Naive thymus-derived CD4-positive, alpha-beta T cell (primary cell): ENCODE measurements at regions of chr19 and their contacts with region 1.

Region 1: DNA sequence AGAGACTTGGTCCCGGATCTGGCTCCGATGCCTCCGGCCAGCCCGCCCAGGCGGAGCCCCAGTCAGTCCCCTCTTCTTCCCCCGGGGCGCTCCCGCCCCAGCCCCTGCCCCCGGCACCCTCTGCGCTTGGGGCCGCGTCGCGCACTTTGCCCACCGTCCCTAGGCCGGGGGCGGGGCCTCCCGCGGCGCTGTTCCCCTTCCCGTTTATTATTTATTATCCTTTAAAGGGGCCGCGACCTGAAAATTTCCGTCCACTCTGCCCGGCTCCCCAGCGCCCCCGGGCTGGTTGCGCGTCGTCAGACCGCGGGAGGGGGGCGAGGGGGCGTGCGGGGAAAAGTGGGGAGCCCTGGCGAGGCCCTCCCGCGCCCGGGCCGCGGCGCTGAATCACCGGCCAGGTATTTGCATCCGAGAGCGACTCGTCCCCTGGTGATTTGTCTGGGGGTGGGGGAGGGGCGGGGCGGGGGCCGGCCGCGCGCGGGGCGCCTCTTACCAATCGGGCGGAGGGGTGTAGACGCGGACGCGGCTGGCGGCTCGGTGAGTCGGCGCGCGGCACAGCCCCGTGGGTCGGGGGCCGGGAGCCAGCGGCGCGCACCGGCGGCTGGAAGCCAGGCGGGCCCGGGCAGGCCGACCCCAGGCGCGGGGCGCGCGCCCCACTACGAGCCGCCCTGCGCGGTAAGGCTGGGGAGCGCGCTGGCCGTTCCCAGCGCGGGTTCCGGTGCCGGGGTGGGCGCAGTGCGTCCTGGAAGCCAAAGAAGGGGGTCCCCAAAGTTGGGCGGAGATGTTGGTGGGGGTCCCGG is at the start of gene ARID3A:
- DNase-seq: peak; percentile 59 to 83 (median 76)
- ATAC-seq: peak; percentile 83
- H3K4me3 ChIP-seq: peak within 1 kb of the TSS; percentile 79
- H3K4me3 Mint-ChIP-seq: peak within 1 kb of the TSS; percentile 63 to 88 (median 82)
- H3K27ac ChIP-seq: peak within 1 kb of the TSS; percentile 68
- H3K27ac Mint-ChIP-seq: peak within 1 kb of the TSS in 6 of 9 donors; percentile 14 to 80 (median 67)
- H3K4me1 ChIP-seq: peaks cover 0 to 4% of the 10 kb centered on the region in 2 donors
- H3K4me1 Mint-ChIP-seq: peaks cover 5 to 20% (median 13%) of the 10 kb centered on the region in 7 donors
- H3K27me3 ChIP-seq: no peaks in the 10 kb centered on the region
- H3K27me3 Mint-ChIP-seq: no peaks in the 10 kb centered on the region
- total RNA-seq, gene ARID3A: 7.1 to 33.1 (median 10.2) TPM

Region 2: DNA sequence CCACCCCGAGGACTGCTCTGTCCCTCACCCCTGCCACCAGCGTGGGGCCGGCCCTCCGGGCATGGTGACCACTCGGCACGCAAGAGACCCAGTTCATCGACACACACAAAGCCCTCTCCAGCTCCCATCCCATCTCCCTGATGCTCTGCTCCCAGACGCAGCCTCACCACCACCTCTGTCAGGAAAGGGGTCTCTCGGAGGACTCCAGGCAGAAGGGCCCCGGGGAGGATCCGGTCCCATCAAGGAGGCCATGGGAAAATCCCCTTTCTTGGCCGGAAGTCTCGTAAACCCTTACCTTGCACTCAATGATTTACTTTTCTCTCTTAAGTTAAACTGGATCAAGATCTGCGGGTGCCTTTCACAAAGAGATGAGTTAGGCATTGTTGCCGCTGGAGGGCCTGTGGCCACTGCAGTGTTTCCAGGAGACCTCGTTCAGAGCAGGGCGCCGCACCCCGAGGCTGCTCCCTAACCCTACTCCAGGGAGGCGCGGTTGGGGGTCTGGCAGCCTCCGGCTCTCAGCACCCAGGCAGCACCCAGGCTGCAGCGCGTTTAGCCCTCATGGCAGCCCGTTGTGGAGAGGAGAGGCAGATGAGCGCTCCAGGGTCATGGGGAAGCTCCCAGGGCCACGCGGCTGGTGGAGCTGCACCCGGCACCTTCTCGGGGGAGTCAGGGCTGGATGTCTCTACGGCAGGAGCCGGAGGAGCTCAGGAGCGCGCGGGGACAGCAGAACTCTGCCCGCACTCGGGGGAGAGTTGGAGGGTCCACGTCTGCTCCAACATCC is 547.7 kb before region 1 on chr19:
- CTCF ChIA-PET with region 1: no interaction called
- POLR2A ChIA-PET with region 1: no interaction called
- intact Hi-C with region 1: no loop called
- DNase-seq: no peak
- ATAC-seq: no peak
- H3K4me3 ChIP-seq: no peak overlapping the region
- H3K4me3 Mint-ChIP-seq: no peak overlapping the region
- H3K27ac ChIP-seq: no peak overlapping the region
- H3K27ac Mint-ChIP-seq: peak overlapping the region in 2 of 9 donors; percentile 81
- H3K4me1 ChIP-seq: no peaks in the 10 kb centered on the region
- H3K4me1 Mint-ChIP-seq: peaks cover 4 to 8% (median 5%) of the 10 kb centered on the region in 7 donors
- H3K27me3 ChIP-seq: no peaks in the 10 kb centered on the region
- H3K27me3 Mint-ChIP-seq: peaks cover 2 to 36% (median 19%) of the 10 kb centered on the region in 5 donors

Region 3: GRCh38 chr19:771332-771785 is 154.4 kb before region 1 on chr19:
- CTCF ChIA-PET with region 1: interaction called, 9 read pairs
- POLR2A ChIA-PET with region 1: no interaction called
- intact Hi-C with region 1: loop called in 1 of 2 experiments (anchors 1 kb)
- DNase-seq: no peak
- ATAC-seq: peak; percentile 67
- H3K4me3 ChIP-seq: no peak overlapping the region
- H3K4me3 Mint-ChIP-seq: no peak overlapping the region
- H3K27ac ChIP-seq: no peak overlapping the region
- H3K27ac Mint-ChIP-seq: no peak overlapping the region
- H3K4me1 ChIP-seq: no peaks in the 10 kb centered on the region
- H3K4me1 Mint-ChIP-seq: peaks cover 0 to 4% (median 0%) of the 10 kb centered on the region in 7 donors
- H3K27me3 ChIP-seq: no peaks in the 10 kb centered on the region
- H3K27me3 Mint-ChIP-seq: peaks cover 0 to 8% (median 4%) of the 10 kb centered on the region in 5 donors

Region 4: GRCh38 chr19:879711-880438 is 45.8 kb before region 1 on chr19:
- CTCF ChIA-PET with region 1: no interaction called
- POLR2A ChIA-PET with region 1: no interaction called
- intact Hi-C with region 1: no loop called
- DNase-seq: no peak
- ATAC-seq: no peak
- H3K4me3 ChIP-seq: no peak overlapping the region
- H3K4me3 Mint-ChIP-seq: no peak overlapping the region
- H3K27ac ChIP-seq: no peak overlapping the region
- H3K27ac Mint-ChIP-seq: peak overlapping the region in 1 of 9 donors; percentile 30
- H3K4me1 ChIP-seq: no peaks in the 10 kb centered on the region
- H3K4me1 Mint-ChIP-seq: peaks cover 0 to 5% (median 3%) of the 10 kb centered on the region in 7 donors
- H3K27me3 ChIP-seq: no peaks in the 10 kb centered on the region
- H3K27me3 Mint-ChIP-seq: no peaks in the 10 kb centered on the region

Region 5: DNA sequence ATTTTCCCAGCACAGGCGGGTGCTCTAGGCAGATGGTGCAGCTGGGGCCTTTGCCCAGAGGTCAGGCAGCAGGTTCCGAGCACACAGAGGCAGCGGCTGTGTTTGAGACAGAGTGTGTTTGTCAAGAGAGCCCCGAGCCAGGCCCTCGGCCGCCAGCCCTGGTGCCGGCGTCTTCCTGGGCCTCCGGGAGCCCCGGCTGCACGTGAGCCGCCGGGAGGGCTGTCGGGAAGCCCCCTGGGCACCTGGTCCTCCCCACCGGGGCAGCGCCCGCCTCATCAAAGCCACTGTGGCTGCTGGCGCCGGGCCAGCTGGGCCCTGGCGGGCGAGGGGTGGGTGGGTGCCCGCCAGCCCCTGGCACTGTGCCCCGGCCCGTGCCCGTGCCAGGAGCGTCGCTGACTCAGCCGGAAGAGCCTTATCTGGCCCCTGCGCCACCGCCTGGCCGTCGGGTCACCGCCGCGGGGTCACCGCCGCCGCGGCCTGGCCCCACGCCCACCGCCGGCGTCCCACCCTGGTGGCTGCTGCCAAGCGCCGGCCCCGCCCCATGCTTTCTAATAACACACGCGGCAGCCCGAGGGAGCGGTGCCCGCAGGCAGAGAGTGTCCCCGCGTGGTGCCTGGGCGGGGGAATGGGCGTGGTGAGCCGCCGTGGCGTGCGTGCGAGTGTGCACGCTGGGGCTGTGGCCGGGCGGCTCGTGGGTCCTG is 15.0 kb after region 1 on chr19:
- CTCF ChIA-PET with region 1: no interaction called
- POLR2A ChIA-PET with region 1: interaction called, 3 read pairs
- intact Hi-C with region 1: loop called in 1 of 2 experiments (anchors 1 kb)
- DNase-seq: peak; percentile 40 to 63 (median 59)
- ATAC-seq: peak; percentile 85
- H3K4me3 ChIP-seq: peak overlapping the region; percentile 59
- H3K4me3 Mint-ChIP-seq: peak overlapping the region; percentile 77 to 92 (median 84)
- H3K27ac ChIP-seq: peak overlapping the region; percentile 47
- H3K27ac Mint-ChIP-seq: peak overlapping the region in 7 of 9 donors; percentile 56 to 94 (median 82)
- H3K4me1 ChIP-seq: peaks cover 14 to 20% of the 10 kb centered on the region in 2 donors
- H3K4me1 Mint-ChIP-seq: peaks cover 21 to 42% (median 29%) of the 10 kb centered on the region in 7 donors
- H3K27me3 ChIP-seq: no peaks in the 10 kb centered on the region
- H3K27me3 Mint-ChIP-seq: peaks cover 0 to 7% (median 0%) of the 10 kb centered on the region in 5 donors

Region 6: DNA sequence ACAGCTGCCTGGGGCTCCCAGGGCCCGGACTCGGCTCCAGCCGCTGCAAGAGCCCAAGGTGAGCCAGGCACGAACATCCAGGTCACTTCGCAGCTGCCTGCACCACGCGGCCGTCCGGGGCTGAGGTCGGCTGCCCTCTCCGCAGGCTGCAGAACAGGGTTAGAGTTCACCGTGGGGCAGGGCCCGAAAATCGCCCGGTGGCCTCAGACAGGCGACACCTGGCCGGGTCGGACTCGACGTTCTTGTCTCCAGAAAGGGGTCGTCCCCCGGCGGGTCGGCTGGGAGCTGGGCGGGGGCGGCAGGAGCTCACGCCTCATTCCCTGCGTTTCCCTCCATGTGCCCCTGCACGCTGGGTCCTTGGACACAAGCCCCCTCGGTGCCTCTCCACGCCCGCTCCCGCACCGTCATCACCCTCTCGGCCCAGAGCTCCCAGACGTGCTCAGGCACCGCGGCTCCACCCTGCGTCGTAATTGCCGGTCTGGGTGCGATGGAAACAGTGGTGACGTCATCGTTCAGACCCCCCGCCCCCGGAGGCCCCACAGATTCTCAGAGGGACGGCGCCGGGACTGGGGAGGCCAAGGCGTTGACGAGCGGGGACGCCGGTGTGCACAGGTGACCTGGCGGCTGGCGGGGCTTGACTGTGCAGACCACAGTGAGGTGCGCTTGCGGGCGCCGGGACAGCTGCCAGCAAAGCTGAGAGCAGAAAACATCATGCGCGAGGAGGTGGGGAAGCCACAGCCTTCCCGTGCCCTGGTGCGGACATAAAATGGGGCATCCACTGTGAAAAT is 70.5 kb after region 1 on chr19:
- CTCF ChIA-PET with region 1: interaction called, 3 read pairs
- POLR2A ChIA-PET with region 1: interaction called, 8 read pairs
- intact Hi-C with region 1: loop called (anchors 1 kb)
- DNase-seq: peak; percentile 59 to 93 (median 73)
- ATAC-seq: peak; percentile 84
- H3K4me3 ChIP-seq: no peak overlapping the region
- H3K4me3 Mint-ChIP-seq: peak overlapping the region; percentile 25 to 82 (median 64)
- H3K27ac ChIP-seq: peak overlapping the region; percentile 38
- H3K27ac Mint-ChIP-seq: peak overlapping the region in 8 of 9 donors; percentile 31 to 96 (median 76)
- H3K4me1 ChIP-seq: peaks cover 17 to 20% of the 10 kb centered on the region in 2 donors
- H3K4me1 Mint-ChIP-seq: peaks cover 6 to 15% (median 10%) of the 10 kb centered on the region in 7 donors
- H3K27me3 ChIP-seq: peaks cover 2% of the 10 kb centered on the region in 2 donors
- H3K27me3 Mint-ChIP-seq: peaks cover 7 to 36% (median 16%) of the 10 kb centered on the region in 5 donors

Region 7: GRCh38 chr19:1094975-1095701 is 169.4 kb after region 1 on chr19 and contains the start of gene POLR2E:
- CTCF ChIA-PET with region 1: no interaction called
- POLR2A ChIA-PET with region 1: no interaction called
- intact Hi-C with region 1: loop called in 1 of 2 experiments (anchors 1 kb)
- DNase-seq: peak; percentile 97 to 99 (median 99)
- ATAC-seq: peak; percentile 98
- H3K4me3 ChIP-seq: peak within 1 kb of the TSS; percentile 68
- H3K4me3 Mint-ChIP-seq: peak within 1 kb of the TSS; percentile 80 to 97 (median 92)
- H3K27ac ChIP-seq: peak within 1 kb of the TSS; percentile 71
- H3K27ac Mint-ChIP-seq: peak within 1 kb of the TSS; percentile 87 to 97 (median 93)
- H3K4me1 ChIP-seq: peaks cover 18 to 23% of the 10 kb centered on the region in 2 donors
- H3K4me1 Mint-ChIP-seq: peaks cover 10 to 59% (median 44%) of the 10 kb centered on the region in 7 donors
- H3K27me3 ChIP-seq: no peaks in the 10 kb centered on the region
- H3K27me3 Mint-ChIP-seq: no peaks in the 10 kb centered on the region
- total RNA-seq, gene POLR2E: 75.3 to 157 (median 82.1) TPM

Region 8: GRCh38 chr19:1189419-1189818 is 263.7 kb after region 1 on chr19:
- CTCF ChIA-PET with region 1: interaction called, 3 read pairs
- POLR2A ChIA-PET with region 1: no interaction called
- intact Hi-C with region 1: loop called (anchors 5 kb)
- DNase-seq: peak in 1 of 9 donors; percentile 67
- ATAC-seq: peak; percentile 57
- H3K4me3 ChIP-seq: no peak overlapping the region
- H3K4me3 Mint-ChIP-seq: peak overlapping the region in 5 of 10 donors; percentile 33 to 63 (median 58)
- H3K27ac ChIP-seq: no peak overlapping the region
- H3K27ac Mint-ChIP-seq: peak overlapping the region; percentile 44 to 94 (median 79)
- H3K4me1 ChIP-seq: peaks cover 21 to 25% of the 10 kb centered on the region in 2 donors
- H3K4me1 Mint-ChIP-seq: peaks cover 11 to 27% (median 18%) of the 10 kb centered on the region in 7 donors
- H3K27me3 ChIP-seq: no peaks in the 10 kb centered on the region
- H3K27me3 Mint-ChIP-seq: no peaks in the 10 kb centered on the region